Calu3 (cell line): ENCODE measurements at regions of chr2 and their contacts with region 1.

Region 1: GRCh38 chr2:174465327-174465726 is 21.5 kb downstream of the GPR155 start:
- DNase-seq: no peak
- H3K4me3 Mint-ChIP-seq: no peak overlapping the region
- H3K27ac Mint-ChIP-seq: no peak overlapping the region
- H3K4me1 Mint-ChIP-seq: no peaks in the 10 kb centered on the region
- H3K27me3 Mint-ChIP-seq: no peaks in the 10 kb centered on the region
- CTCF ChIP-seq: no peak

Region 2: GRCh38 chr2:174125090-174125489 is 340.2 kb before region 1 on chr2:
- CTCF ChIA-PET with region 1: no interaction called
- intact Hi-C with region 1: no loop called
- DNase-seq: no peak
- H3K4me3 Mint-ChIP-seq: no peak overlapping the region
- H3K27ac Mint-ChIP-seq: no peak overlapping the region
- H3K4me1 Mint-ChIP-seq: peaks cover 18% of the 10 kb centered on the region
- H3K27me3 Mint-ChIP-seq: no peaks in the 10 kb centered on the region
- CTCF ChIP-seq: no peak

Region 3: GRCh38 chr2:174522553-174522952 is 57.2 kb after region 1 on chr2:
- CTCF ChIA-PET with region 1: interaction called, 3 read pairs
- intact Hi-C with region 1: loop called (anchors 1 kb)
- DNase-seq: no peak
- H3K4me3 Mint-ChIP-seq: no peak overlapping the region
- H3K27ac Mint-ChIP-seq: no peak overlapping the region
- H3K4me1 Mint-ChIP-seq: no peaks in the 10 kb centered on the region
- H3K27me3 Mint-ChIP-seq: peaks cover 44% of the 10 kb centered on the region
- CTCF ChIP-seq: no peak

Region 4: GRCh38 chr2:174546581-174547506 is 81.5 kb after region 1 on chr2:
- CTCF ChIA-PET with region 1: interaction called, 32 read pairs
- intact Hi-C with region 1: loop called (anchors 1 kb)
- DNase-seq: peak; percentile 39
- H3K4me3 Mint-ChIP-seq: no peak overlapping the region
- H3K27ac Mint-ChIP-seq: no peak overlapping the region
- H3K4me1 Mint-ChIP-seq: peaks cover 26% of the 10 kb centered on the region
- H3K27me3 Mint-ChIP-seq: no peaks in the 10 kb centered on the region
- CTCF ChIP-seq: peak; percentile 30

Region 5: GRCh38 chr2:174603280-174603679 is 138.0 kb after region 1 on chr2:
- CTCF ChIA-PET with region 1: interaction called, 13 read pairs
- intact Hi-C with region 1: loop called (anchors 2 kb)
- DNase-seq: peak; percentile 44
- H3K4me3 Mint-ChIP-seq: no peak overlapping the region
- H3K27ac Mint-ChIP-seq: no peak overlapping the region
- H3K4me1 Mint-ChIP-seq: no peaks in the 10 kb centered on the region
- H3K27me3 Mint-ChIP-seq: peaks cover 14% of the 10 kb centered on the region
- CTCF ChIP-seq: peak; percentile 35

Region 6: DNA sequence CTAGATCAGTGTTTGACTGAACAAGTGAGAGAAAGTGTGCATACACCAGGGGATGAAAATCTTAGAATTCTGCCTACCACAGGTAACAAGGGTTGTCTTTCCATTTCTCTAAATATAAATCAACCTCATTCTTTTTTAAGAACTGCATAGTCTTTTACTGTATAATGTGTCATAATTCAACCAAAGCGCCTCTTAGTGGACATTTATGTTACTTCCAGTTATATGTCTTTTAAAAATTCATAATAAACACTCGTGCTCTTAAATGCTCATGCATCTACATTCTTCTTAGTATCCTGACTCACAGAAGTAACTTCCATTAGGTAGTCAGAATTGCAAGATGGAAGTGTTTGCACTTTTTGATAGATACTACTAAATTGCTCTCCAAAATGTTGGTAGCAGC is 222.8 kb after region 1 on chr2:
- CTCF ChIA-PET with region 1: interaction called, 5 read pairs
- intact Hi-C with region 1: loop called (anchors 1 kb)
- DNase-seq: no peak
- H3K4me3 Mint-ChIP-seq: no peak overlapping the region
- H3K27ac Mint-ChIP-seq: no peak overlapping the region
- H3K4me1 Mint-ChIP-seq: peaks cover 9% of the 10 kb centered on the region
- H3K27me3 Mint-ChIP-seq: peaks cover 70% of the 10 kb centered on the region
- CTCF ChIP-seq: peak; percentile 6

Region 7: DNA sequence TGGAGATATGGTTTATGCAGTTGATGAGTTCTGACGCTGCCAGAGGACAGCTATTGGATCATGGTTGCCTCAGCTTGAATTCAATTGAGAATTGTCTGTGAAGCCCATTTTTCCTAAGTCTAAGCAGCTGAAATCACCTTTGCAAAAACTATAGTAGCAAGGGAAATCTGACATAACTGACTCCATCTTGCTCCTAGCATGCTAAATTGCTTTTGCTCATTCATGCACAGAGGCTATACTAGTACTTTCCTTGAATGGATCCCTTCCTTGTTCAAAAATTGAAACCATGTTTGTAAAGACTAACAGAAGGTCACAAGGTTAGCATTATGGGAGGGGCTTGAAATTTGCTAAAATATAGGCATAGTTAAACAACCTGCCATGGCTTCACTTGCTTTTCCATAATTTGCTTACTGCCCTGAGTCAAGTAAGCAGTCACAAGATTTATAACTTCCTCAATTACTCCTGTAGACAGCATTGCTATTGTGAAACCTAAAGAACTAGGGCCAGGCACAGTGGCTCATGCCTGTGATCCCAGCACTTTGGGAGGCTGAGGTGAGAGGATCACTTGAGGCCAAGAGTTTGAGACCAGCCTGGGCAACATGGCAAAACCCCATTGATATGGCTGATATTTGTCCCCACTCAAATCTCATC is 257.7 kb after region 1 on chr2:
- CTCF ChIA-PET with region 1: no interaction called
- intact Hi-C with region 1: no loop called
- DNase-seq: no peak
- H3K4me3 Mint-ChIP-seq: no peak overlapping the region
- H3K27ac Mint-ChIP-seq: no peak overlapping the region
- H3K4me1 Mint-ChIP-seq: no peaks in the 10 kb centered on the region
- H3K27me3 Mint-ChIP-seq: peaks cover 36% of the 10 kb centered on the region
- CTCF ChIP-seq: no peak